ENCODE measurements at regions of chr2 and their contacts with region 1.

Region 1: GRCh38 chr2:154855085-154855484 is 156.6 kb downstream of the KCNJ3 start:
- DNase-seq: no peak
- ATAC-seq: no peak
- H3K4me3 ChIP-seq: no peak overlapping the region
- H3K27ac ChIP-seq: no peak overlapping the region
- H3K4me1 ChIP-seq: no peaks in the 10 kb centered on the region
- H3K27me3 ChIP-seq: no peaks in the 10 kb centered on the region
- CTCF ChIP-seq: no peak
- POLR2A ChIP-seq: no peak
- RAD21 ChIP-seq: no peak

Region 2: GRCh38 chr2:152974146-152974545 is 1880.9 kb before region 1 on chr2:
- CTCF ChIA-PET with region 1: no interaction called
- POLR2A ChIA-PET with region 1: no interaction called
- RAD21 ChIA-PET with region 1: no interaction called
- intact Hi-C with region 1: loop called (anchors 5 kb)
- DNase-seq: no peak
- ATAC-seq: no peak
- H3K4me3 ChIP-seq: no peak overlapping the region
- H3K27ac ChIP-seq: no peak overlapping the region
- H3K4me1 ChIP-seq: no peaks in the 10 kb centered on the region
- H3K27me3 ChIP-seq: no peaks in the 10 kb centered on the region
- CTCF ChIP-seq: no peak
- POLR2A ChIP-seq: no peak
- RAD21 ChIP-seq: no peak

Measured in HCT116 (cell line).